Right ventricle myocardium inferior (tissue), 1 donor: ENCODE measurements at regions of chr3 and their contacts with region 1.

Region 1: DNA sequence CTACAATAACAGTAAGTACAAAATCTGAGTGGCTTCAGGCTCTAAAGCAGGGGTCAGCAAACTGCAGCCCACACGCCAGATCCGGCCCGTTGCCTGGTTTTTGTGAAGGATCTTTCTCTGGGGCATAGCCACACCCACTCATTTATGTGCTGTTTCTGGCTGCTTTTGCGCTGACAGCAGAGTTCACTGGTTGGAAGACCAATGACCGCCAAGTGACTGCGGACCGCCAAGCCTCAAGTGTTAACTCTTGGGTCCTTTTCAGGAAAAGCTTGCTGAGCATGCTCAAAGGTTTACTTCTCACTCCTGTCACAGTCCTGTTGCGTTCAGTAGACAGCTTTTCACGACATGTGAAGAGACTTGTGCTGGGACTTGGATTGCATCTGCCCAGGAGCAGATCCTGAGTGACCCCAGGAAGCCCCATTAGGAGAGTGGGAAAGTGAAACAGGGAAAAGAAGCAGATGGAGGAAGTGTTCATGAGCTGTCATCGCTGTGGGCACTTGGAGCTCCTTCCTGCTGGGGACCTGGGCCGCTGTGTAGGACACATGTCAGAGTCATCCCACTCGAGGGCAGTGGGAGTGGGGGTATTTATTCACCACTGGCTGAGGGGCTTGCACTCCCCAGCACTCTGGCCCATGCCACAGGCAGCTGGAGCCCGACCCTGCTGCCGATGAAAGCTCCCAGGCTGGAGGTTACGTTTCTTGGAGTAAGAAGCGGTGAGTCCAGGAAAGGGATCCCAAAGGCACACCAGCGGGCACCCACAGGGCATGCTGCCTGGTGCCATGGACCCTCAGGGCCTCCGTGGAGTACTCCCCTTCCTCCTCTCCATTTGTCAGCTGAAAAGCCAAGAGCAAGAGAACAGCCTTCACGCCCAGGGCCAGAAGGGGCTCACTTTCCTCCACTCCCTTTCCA is 249.1 kb downstream of the PLCL2 start:
- DNase-seq: no peak
- ATAC-seq: no peak

Region 2: GRCh38 chr3:16842272-16843270 is 291.3 kb before region 1 on chr3:
- intact Hi-C with region 1: no loop called
- DNase-seq: peak; percentile 77
- ATAC-seq: peak; percentile 45

Region 3: GRCh38 chr3:17088602-17089313 is 45.1 kb before region 1 on chr3:
- intact Hi-C with region 1: loop called (anchors 5 kb)
- DNase-seq: no peak
- ATAC-seq: peak; percentile 66

Region 4: DNA sequence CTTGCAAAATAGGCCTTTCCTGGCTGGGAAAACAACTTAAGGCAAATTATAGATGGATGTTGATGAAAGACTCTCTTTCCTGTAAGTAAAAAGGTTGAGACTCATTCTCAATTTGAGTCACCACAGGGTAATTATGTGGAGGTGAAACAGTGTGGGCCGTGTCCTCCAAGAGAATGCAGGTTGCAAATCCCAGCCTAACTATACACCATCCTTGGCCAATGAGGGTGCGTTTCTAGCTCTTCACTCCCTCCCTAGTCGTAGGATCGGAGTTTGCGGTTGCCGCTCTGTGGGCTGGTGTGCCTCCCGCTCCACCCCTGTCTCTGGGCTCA is 10.7 kb after region 1 on chr3:
- intact Hi-C with region 1: no loop called
- DNase-seq: no peak
- ATAC-seq: no peak

Region 5: GRCh38 chr3:17623464-17623863 is 489.6 kb after region 1 on chr3:
- intact Hi-C with region 1: no loop called
- DNase-seq: no peak
- ATAC-seq: no peak